Adrenal gland (tissue), 19 donors: ENCODE measurements at regions of chr16 and their contacts with region 1.

Region 1: GRCh38 chr16:19717771-19718602 is at the starts of genes IQCK and KNOP1:
- DNase-seq: peak; percentile 87 to 93 (median 88)
- H3K4me3 ChIP-seq: peak within 1 kb of the TSS; percentile 27 to 98 (median 84)
- H3K27ac ChIP-seq: peak within 1 kb of the TSS in 4 of 5 donors; percentile 13 to 85 (median 56)
- H3K4me1 ChIP-seq: peaks cover 6 to 18% of the 10 kb centered on the region in 2 donors
- H3K27me3 ChIP-seq: no peaks in the 10 kb centered on the region
- CTCF ChIP-seq: peak in 3 of 6 experiments; percentile 6 to 30 (median 21)
- POLR2A ChIP-seq: peak; percentile 21 to 24
- total RNA-seq, gene IQCK: 8.2 to 35.2 (median 13.7) TPM
- total RNA-seq, gene KNOP1: 8.1 to 23.7 (median 11.8) TPM

Region 2: DNA sequence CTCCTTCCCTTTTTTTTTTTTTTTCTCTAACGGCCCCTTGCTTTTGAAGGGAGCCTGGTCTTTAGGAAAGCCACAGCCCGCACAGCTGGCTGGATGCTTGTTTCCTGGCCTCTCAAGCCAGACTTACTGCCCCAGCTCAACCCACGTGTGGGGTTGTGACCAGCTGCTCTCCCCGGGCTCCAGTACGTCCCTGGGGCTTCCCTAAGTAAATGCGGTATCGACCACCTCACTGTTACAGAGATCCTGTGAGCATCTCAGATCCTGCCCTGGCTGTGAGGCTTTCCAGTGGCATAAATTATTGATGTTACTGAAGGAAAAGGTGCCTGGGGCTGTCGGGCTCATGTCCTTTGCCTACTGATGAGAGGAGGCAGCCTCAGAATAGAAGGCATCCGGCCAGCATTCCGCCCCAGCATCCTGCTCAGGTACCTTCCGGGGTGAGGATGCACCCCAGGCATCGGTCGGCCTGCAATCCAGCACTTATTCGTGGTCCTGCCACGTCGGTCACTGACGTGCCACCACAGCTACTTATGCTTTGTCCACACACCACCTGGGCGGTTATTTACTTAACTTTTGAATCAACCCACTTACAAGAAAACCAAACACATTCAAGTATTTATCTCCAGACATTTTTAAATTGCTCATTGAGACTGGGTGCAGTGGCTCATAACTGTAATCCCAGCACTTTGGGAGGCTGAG is 157.0 kb after region 1 on chr16:
- intact Hi-C with region 1: loop called in 1 of 2 experiments (anchors 5 kb)
- DNase-seq: no peak
- H3K4me3 ChIP-seq: no peak overlapping the region
- H3K27ac ChIP-seq: no peak overlapping the region
- H3K4me1 ChIP-seq: no peaks in the 10 kb centered on the region
- H3K27me3 ChIP-seq: no peaks in the 10 kb centered on the region
- CTCF ChIP-seq: no peak
- POLR2A ChIP-seq: no peak

Region 3: GRCh38 chr16:19886073-19886941 is 168.3 kb after region 1 on chr16:
- intact Hi-C with region 1: loop called in 1 of 2 experiments (anchors 5 kb)
- DNase-seq: peak; percentile 70 to 92 (median 79)
- H3K4me3 ChIP-seq: peak overlapping the region in 1 of 4 donors; percentile 89
- H3K27ac ChIP-seq: no peak overlapping the region
- H3K4me1 ChIP-seq: peaks cover 5 to 19% of the 10 kb centered on the region in 2 donors
- H3K27me3 ChIP-seq: no peaks in the 10 kb centered on the region
- CTCF ChIP-seq: peak; percentile 99 to 100 (median 100)
- POLR2A ChIP-seq: peak in 1 of 2 donors; percentile 32